Activated naive CD4-positive, alpha-beta T cell treated with anti-CD3 and anti-CD28 coated beads for 36 hours (primary cell): ENCODE measurements at regions of chr7 and their contacts with region 1.

Region 1: DNA sequence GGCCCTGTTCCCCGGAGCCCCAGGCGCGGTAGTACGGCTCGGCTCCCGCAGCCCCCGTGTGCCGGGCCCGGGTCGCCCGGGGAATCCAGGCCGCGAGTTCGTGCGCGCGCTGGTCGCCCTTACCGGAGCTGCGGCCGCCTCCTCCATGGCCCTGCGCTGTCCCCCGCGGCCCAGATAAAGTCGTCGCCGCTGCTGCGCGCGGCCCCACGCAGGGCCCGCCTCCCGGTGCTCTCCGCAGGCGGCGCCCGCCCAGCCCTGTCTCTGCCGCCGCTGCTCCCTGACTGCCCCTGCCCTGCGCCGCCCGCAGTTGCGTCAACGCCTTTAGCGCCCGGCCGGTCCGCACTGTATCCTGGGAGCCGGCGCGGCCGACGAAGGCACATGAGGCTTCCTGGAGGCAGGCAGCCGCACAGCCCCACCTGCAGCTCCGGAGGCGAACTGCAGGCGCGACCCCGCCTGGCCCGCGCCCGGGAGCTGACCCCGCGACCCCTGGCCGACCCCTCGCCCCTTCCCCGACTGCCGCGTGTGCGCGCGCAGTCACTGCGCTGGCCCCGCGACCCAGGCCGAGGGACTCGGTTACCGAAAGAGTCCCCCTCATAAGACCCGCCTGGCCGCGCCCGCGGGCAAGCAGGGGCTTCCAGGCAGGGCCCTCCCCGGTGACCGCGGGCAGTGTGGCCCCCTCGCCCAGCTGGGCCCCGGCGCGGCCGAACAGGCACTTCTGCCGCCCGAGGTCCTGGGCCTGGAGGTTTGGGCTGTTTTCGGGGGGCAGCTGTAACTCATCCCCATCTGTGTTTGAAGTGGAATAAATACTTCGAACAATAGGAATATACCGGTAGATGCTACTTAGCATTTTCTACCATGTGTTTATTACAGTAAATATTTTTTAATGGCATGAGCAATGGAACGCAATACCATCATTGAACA is 127.1 kb upstream of the ZNF746 start:
- DNase-seq: peak; percentile 93
- H3K4me3 Mint-ChIP-seq: peak overlapping the region; percentile 87
- H3K27ac Mint-ChIP-seq: peak overlapping the region; percentile 80
- H3K4me1 Mint-ChIP-seq: peaks cover 33% of the 10 kb centered on the region
- H3K27me3 Mint-ChIP-seq: no peaks in the 10 kb centered on the region

Region 2: GRCh38 chr7:149147072-149147751 is 477.5 kb before region 1 on chr7 and contains the start of gene ZNF398:
- CTCF ChIA-PET with region 1: interaction called, 3 read pairs
- intact Hi-C with region 1: loop called (anchors 1 kb)
- DNase-seq: peak; percentile 73
- H3K4me3 Mint-ChIP-seq: peak within 1 kb of the TSS; percentile 87
- H3K27ac Mint-ChIP-seq: peak within 1 kb of the TSS; percentile 91
- H3K4me1 Mint-ChIP-seq: peaks cover 33% of the 10 kb centered on the region
- H3K27me3 Mint-ChIP-seq: no peaks in the 10 kb centered on the region
- total RNA-seq, gene ZNF398: 4.3 to 5.0 TPM

Region 3: DNA sequence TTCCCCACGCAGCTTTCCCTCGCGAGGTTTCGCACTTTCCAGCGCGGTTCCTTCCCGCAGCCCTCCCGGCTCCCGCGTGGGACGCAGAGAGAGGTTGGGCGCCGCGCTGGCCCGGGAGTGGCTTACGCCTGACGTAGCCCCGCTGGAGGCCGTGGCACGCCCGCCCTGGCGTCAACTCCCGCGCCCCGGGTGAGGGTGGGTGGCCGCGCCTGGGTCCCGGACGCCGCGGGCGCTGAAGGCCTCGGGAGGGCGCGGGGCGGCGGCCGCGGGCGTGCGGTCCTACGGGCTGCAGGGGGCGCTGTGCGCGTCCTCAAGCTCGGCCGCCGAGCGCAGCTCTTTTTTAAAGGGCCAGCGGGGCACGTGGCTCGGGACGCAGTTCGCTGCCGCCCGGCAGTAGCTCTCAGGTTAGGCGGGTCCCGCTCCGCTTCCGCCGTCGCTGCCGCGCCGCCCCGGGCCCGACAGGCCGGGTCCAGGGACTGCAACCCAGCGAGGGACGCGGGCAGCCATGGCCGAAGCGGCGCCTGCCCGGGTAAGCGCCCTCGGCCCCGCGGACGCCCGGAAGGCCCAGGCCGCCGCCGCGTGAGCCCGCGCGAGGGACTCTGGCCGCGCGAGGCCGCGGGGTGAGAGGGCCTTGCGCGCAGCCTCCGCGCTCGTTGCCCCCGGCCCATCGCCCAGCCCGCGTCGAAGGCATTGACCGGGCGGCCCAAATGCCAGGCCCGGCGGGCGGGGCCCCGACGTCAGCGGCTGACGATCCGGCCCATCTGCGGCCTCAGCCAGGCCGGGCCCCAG is 362.7 kb before region 1 on chr7 and contains the start of gene ZNF783:
- CTCF ChIA-PET with region 1: no interaction called
- intact Hi-C with region 1: loop called (anchors 1 kb)
- DNase-seq: peak; percentile 85
- H3K4me3 Mint-ChIP-seq: peak within 1 kb of the TSS; percentile 75
- H3K27ac Mint-ChIP-seq: peak within 1 kb of the TSS; percentile 74
- H3K4me1 Mint-ChIP-seq: peaks cover 29% of the 10 kb centered on the region
- H3K27me3 Mint-ChIP-seq: no peaks in the 10 kb centered on the region
- total RNA-seq, gene ZNF783: 6.8 to 7.1 TPM

Region 4: DNA sequence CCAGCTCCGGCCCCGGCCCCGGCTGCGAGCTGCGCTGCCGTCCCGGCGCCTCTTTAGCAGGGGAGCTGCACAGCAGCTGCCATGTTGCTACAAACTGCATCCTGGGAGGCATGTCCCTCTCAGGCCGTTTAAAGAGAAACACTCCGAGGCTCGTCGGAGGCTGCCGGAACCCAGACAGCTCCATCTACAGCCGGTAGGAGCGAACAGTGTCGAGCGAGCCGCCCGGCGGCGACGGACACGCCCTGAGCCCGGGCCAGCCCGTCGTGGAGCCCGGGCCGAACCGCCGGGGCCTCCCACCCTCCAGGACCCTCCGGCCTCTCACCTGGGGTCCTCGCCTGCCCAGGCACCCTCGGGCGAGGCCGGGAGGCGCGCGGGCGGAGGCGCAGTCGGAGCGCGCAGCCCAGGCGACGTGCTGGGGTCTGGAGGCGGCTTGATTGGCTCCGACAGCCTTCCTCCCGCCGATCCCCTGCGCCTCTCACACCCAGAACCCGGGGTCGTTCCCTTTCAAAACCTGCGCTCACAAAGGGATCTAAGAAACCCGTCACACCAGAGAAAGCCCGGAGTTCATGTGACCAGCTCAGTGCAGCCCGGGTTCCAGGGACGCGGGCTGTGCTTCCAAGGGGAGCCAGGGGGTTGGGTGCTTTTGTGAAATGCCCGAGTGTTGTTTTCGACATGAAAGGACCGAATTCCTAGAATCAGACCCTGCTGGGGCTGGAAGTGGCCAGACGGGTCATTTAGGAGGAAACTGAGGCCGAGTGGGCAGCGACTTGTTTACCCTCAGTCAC is 164.0 kb before region 1 on chr7 and contains the start of gene ZNF777:
- CTCF ChIA-PET with region 1: interaction called, 9 read pairs
- intact Hi-C with region 1: loop called (anchors 1 kb)
- DNase-seq: peak; percentile 85
- H3K4me3 Mint-ChIP-seq: peak within 1 kb of the TSS; percentile 80
- H3K27ac Mint-ChIP-seq: peak within 1 kb of the TSS; percentile 59
- H3K4me1 Mint-ChIP-seq: peaks cover 22% of the 10 kb centered on the region
- H3K27me3 Mint-ChIP-seq: peaks cover 3% of the 10 kb centered on the region
- total RNA-seq, gene ZNF777: 8.7 to 9.7 TPM

Region 5: DNA sequence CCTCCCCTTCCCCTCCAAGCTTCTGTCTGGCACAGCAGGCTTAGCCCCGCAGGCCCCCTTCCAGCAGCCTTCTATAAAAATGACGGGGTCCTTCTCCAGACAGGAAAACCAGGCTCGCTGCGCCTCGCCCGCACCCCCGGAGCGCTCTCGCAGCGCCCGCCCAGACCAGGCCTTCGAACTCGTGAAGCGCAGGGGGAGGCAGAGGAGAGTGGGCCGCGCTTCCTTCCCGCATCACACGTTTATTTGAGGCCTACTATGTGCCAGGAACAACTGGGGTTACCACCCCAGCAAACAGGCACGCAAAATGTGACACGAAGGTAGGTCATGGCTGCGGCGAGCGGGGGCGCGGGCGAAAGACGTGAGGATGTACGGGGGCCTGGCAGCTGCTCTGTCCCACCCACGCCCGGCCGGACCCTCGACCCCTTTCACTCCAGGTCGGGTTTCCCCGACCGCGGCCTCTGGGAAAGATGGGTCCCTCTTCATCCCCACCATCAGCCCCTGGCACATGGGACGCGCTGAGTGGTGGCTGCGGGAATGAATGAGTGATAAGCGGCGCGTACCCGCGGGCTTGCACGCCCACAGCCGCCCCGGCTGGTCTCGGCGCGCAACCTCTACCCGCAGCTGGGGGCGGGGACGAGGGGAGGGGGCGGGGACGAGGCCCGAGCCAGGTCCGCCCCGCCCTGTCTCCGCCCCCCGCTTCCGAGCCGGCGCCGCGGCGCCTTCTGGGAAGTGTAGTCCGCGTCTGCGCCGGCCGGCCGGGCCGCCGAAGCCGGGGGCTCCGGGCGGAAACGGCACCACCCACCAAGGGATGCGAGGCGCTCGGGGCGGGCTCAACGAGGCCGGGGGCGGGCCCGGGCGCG is 89.6 kb after region 1 on chr7:
- CTCF ChIA-PET with region 1: no interaction called
- intact Hi-C with region 1: loop called (anchors 2 kb)
- DNase-seq: peak; percentile 94
- H3K4me3 Mint-ChIP-seq: peak overlapping the region; percentile 73
- H3K27ac Mint-ChIP-seq: no peak overlapping the region
- H3K4me1 Mint-ChIP-seq: peaks cover 17% of the 10 kb centered on the region
- H3K27me3 Mint-ChIP-seq: no peaks in the 10 kb centered on the region

Region 6: GRCh38 chr7:149873074-149873969 is 248.6 kb after region 1 on chr7 and contains the start of gene ATP6V0E2:
- CTCF ChIA-PET with region 1: no interaction called
- intact Hi-C with region 1: loop called (anchors 2 kb)
- DNase-seq: peak; percentile 94
- H3K4me3 Mint-ChIP-seq: peak within 1 kb of the TSS; percentile 83
- H3K27ac Mint-ChIP-seq: peak within 1 kb of the TSS; percentile 88
- H3K4me1 Mint-ChIP-seq: peaks cover 72% of the 10 kb centered on the region
- H3K27me3 Mint-ChIP-seq: no peaks in the 10 kb centered on the region
- total RNA-seq, gene ATP6V0E2: 31.8 to 32.4 TPM

Region 7: DNA sequence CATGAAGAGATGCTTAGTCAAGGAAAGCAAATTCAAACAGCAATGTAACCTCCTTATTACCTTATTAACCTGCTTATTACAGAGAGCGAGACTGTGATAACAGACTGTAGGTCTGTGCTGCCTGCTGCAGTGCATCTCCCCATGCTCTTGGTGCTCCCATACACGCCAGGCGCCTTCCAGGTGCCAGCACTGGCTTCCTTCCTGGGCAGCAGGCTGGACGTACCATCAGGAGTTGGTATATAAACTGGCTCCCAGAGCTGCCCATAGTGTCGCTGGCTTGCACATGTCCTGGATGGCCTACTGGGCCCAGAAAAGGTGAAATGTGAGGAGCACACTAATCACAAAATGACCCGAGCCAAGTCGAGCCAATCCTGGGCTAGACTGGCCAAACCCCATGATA is 262.6 kb after region 1 on chr7:
- CTCF ChIA-PET with region 1: no interaction called
- intact Hi-C with region 1: no loop called
- DNase-seq: no peak
- H3K4me3 Mint-ChIP-seq: no peak overlapping the region
- H3K27ac Mint-ChIP-seq: no peak overlapping the region
- H3K4me1 Mint-ChIP-seq: peaks cover 8% of the 10 kb centered on the region
- H3K27me3 Mint-ChIP-seq: no peaks in the 10 kb centered on the region